ENCODE measurements at regions of chrX and their contacts with region 1.

Region 1: GRCh38 chrX:151974336-151975227 is at the start of gene GABRE:
- DNase-seq: peak in 1 of 2 donors; percentile 76
- H3K4me3 ChIP-seq: peak within 1 kb of the TSS; percentile 53 to 84
- H3K27ac ChIP-seq: peak within 1 kb of the TSS; percentile 73 to 79
- H3K4me1 ChIP-seq: no peaks in the 10 kb centered on the region
- H3K27me3 ChIP-seq: no peaks in the 10 kb centered on the region
- CTCF ChIP-seq: no peak
- total RNA-seq, gene GABRE: 13.5 TPM

Region 2: DNA sequence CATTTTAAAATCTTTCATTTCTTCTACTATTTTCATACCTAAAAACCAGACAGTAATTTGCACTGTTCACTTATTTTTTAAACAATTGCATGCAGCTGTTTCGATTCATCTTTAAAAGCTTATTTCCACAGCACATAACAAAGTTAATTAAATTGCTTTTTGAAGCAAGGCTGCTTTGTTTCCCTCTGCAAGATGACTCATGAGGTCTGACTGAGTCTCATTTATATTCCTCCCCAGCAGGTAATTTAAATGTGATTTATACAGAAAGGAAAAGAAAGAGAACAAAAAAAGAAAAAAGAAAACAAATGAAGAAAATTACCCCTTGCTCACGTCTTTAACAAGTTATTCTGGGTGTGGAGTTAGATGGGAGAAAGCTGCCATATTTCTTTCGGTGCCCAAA is 554.8 kb before region 1 on chrX:
- intact Hi-C with region 1: no loop called
- DNase-seq: no peak
- H3K4me3 ChIP-seq: no peak overlapping the region
- H3K27ac ChIP-seq: no peak overlapping the region
- H3K4me1 ChIP-seq: no peaks in the 10 kb centered on the region
- H3K27me3 ChIP-seq: no peaks in the 10 kb centered on the region
- CTCF ChIP-seq: no peak

Region 3: DNA sequence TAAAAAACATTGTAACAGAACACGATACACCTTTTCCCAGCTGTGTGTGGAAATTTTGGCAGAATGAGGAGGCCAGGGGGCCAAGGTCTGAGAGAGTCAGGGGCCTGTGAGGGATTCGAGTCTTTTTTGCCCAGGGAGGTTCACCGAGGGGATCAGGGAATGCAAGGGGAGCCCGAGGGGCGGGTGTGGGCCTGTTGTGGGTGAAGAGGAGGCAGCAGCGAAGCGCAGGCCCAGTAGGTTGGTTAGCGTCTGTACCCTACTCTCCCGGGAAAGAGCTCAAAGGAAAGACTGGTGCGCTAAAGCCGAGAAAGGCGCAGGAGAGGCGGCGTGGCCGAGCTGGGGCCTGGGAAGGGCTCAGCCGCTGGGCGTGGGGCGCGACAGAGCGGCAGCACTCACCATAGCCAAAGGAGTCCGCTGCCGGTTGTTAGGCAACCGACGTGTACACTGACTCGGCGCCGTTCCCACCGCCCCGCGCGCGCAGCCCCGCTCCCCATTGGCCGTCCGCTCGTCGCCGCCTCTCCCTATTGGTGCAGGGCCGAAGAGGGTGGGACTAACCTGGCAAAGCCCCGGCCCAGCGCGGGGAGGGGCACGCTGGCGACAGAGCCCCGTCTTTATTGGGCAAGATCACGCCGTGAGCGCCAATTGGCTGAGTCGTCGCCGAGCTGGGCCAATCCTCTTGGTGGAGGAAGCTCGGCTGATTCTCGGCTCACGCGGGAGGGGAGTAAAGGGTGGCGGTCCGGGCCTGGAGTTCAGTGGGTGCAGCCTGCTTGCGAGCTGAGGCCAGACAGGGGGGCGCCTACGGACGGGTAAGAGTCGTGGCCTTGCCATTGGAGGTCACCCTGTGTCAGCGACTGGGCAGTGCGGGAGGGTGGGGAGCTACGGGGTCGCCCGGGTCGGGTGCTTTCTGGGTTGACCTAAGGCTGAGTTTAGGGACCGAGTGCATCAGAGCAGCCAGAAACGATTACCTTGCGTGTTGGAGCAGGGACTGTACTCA is 856.0 kb after region 1 on chrX and contains the starts of genes CETN2 and NSDHL:
- intact Hi-C with region 1: loop called (anchors 10 kb)
- DNase-seq: peak; percentile 86 to 97
- H3K4me3 ChIP-seq: peak within 1 kb of the TSS; percentile 53 to 69
- H3K27ac ChIP-seq: peak within 1 kb of the TSS; percentile 41 to 55
- H3K4me1 ChIP-seq: peaks cover 0 to 3% of the 10 kb centered on the region in 2 donors
- H3K27me3 ChIP-seq: no peaks in the 10 kb centered on the region
- CTCF ChIP-seq: no peak
- total RNA-seq, gene CETN2: 7.8 TPM
- total RNA-seq, gene NSDHL: 8.8 TPM

Measured in ascending aorta (tissue), 2 donors.